Ovary (tissue), 10 donors: ENCODE measurements at regions of chr12 and their contacts with region 1.

Region 1: DNA sequence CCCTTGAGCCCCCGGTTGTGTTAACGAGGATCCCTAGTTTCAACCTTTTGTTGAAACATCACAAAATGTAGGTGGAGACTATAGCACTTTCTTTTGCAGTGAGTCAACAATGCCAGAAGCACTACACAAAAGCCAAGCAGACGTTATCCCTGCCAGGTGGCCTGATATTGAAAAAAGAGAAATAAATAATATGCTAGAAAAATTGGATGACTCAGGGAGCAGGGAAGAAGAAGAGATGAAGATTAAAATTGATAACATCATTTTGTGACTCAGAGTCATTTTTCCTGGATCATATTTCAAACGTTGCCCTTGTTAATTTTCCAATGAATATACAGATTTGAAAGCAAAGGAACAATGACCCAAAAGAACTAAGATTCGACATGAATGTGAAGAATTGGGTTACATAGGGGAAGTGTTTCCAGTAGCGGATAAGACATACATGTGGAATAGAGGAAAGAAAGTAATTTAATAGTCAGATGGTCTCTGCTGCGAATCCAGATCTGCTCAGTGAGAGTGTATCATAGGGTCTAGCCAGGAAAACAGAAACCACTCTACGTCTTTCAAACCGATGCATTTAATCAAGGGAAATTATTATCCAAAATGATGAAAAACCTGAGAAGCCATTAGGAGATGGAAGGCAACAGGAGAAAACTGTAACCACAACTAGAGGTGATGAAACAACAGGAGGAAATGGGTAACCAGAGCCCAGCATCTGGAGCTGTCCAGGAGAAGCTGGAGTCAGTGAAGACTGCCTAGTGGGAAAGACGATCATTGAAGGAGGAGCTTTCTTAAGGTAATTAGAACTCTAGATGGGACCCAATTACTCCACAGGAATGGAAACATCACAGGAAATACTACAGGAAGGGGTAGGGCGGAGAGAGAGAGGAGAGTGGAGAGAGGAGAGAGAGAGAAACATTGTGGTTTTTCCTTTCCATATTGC is 57.9 kb downstream of the RERG start:
- DNase-seq: no peak
- H3K4me3 ChIP-seq: no peak overlapping the region
- H3K27ac ChIP-seq: peak overlapping the region in 1 of 2 donors; percentile 58
- H3K4me1 ChIP-seq: peaks cover 12% of the 10 kb centered on the region
- H3K27me3 ChIP-seq: no peaks in the 10 kb centered on the region
- CTCF ChIP-seq: no peak
- EP300 ChIP-seq: no peak
- POLR2A ChIP-seq: no peak

Region 2: DNA sequence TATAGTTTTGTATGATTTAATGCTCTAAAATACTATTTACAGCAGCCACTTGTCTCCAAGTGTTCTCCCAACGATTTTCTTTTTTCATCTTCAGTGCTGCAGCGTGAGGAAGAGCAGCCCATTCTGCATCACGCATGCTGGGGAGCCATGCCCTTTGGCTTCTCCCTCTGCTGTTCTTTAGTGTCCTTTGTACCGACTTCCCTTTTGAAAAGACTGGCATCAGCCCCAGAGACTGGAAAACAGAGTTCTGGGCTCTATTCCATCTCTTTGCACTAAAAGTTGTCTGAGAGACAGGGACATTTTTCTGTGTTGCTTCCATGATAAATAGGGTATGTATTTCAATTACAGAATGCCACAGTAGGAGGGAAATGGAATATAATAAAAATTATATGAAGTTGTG is 47.2 kb before region 1 on chr12:
- intact Hi-C with region 1: no loop called
- DNase-seq: peak in 2 of 5 donors; percentile 20 to 30
- H3K4me3 ChIP-seq: no peak overlapping the region
- H3K27ac ChIP-seq: no peak overlapping the region
- H3K4me1 ChIP-seq: peaks cover 2% of the 10 kb centered on the region
- H3K27me3 ChIP-seq: no peaks in the 10 kb centered on the region
- CTCF ChIP-seq: no peak
- EP300 ChIP-seq: no peak
- POLR2A ChIP-seq: no peak

Region 3: GRCh38 chr12:15208125-15208524 is 44.8 kb after region 1 on chr12:
- intact Hi-C with region 1: loop called in 1 of 4 experiments (anchors 5 kb)
- DNase-seq: peak in 1 of 5 donors; percentile 48
- H3K4me3 ChIP-seq: no peak overlapping the region
- H3K27ac ChIP-seq: no peak overlapping the region
- H3K4me1 ChIP-seq: peaks cover 2% of the 10 kb centered on the region
- H3K27me3 ChIP-seq: no peaks in the 10 kb centered on the region
- CTCF ChIP-seq: peak in 1 of 3 donors; percentile 65
- EP300 ChIP-seq: no peak
- POLR2A ChIP-seq: no peak